Activated B cell treated with CpG ODN at 0.5 μM for 24 hours (primary cell): ENCODE measurements at regions of chr6 and their contacts with region 1.

Region 1: GRCh38 chr6:129875610-129876520 is 14.8 kb upstream of the TMEM244 start:
- DNase-seq: no peak
- ATAC-seq: peak; percentile 72
- H3K4me3 Mint-ChIP-seq: peak overlapping the region; percentile 52
- H3K27ac Mint-ChIP-seq: peak overlapping the region; percentile 27
- H3K4me1 Mint-ChIP-seq: peaks cover 29% of the 10 kb centered on the region
- H3K27me3 Mint-ChIP-seq: no peaks in the 10 kb centered on the region
- CTCF ChIP-seq: no peak

Region 2: DNA sequence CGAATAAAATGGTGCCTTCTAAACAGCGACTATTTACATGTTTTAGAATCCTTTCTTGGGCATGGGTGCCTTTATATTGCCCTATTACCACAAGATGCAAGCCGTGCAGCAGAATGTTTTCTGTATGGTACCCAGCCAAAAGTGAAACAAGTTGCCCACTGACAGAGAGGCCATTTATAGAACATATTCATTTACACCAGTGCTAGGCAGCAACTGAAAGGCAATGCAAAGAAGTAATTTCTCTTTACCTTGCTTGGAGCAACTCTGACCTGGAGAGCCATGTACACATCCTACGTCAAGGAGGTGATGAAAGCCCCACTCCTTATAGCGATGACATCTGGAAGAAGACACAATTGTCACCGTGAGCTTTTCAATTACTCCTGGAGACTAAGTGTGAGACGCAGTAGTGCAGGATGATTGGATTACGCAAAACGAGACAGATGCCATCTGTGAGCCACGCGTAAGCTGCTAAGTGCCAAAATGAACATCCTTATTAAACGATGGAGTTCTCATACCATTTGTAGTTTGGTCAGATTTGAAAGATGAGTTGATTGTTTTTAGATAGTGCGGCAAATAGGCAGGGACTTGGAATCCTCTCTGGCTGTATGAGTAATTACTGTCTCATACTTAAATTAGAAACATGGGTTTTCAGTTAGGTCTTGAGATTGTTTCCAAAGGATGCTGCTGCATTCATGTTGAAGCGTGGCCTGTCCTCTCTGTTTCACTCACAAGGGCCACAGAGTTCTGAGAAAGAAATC is 14.8 kb before region 1 on chr6 and contains the start of gene TMEM244:
- CTCF ChIA-PET with region 1: interaction called, 3 read pairs
- POLR2A ChIA-PET with region 1: interaction called, 3 read pairs
- intact Hi-C with region 1: loop called (anchors 1 kb)
- DNase-seq: no peak
- ATAC-seq: peak; percentile 21
- H3K4me3 Mint-ChIP-seq: peak within 1 kb of the TSS; percentile 45
- H3K27ac Mint-ChIP-seq: peak within 1 kb of the TSS; percentile 36
- H3K4me1 Mint-ChIP-seq: peaks cover 9% of the 10 kb centered on the region
- H3K27me3 Mint-ChIP-seq: no peaks in the 10 kb centered on the region
- CTCF ChIP-seq: no peak
- total RNA-seq, gene TMEM244: not detected in 2 replicates

Region 3: GRCh38 chr6:129893640-129894039 is 17.8 kb after region 1 on chr6:
- CTCF ChIA-PET with region 1: no interaction called
- POLR2A ChIA-PET with region 1: interaction called, 3 read pairs
- intact Hi-C with region 1: loop called (anchors 2 kb)
- DNase-seq: no peak
- ATAC-seq: no peak
- H3K4me3 Mint-ChIP-seq: no peak overlapping the region
- H3K27ac Mint-ChIP-seq: no peak overlapping the region
- H3K4me1 Mint-ChIP-seq: peaks cover 22% of the 10 kb centered on the region
- H3K27me3 Mint-ChIP-seq: no peaks in the 10 kb centered on the region
- CTCF ChIP-seq: no peak

Region 4: DNA sequence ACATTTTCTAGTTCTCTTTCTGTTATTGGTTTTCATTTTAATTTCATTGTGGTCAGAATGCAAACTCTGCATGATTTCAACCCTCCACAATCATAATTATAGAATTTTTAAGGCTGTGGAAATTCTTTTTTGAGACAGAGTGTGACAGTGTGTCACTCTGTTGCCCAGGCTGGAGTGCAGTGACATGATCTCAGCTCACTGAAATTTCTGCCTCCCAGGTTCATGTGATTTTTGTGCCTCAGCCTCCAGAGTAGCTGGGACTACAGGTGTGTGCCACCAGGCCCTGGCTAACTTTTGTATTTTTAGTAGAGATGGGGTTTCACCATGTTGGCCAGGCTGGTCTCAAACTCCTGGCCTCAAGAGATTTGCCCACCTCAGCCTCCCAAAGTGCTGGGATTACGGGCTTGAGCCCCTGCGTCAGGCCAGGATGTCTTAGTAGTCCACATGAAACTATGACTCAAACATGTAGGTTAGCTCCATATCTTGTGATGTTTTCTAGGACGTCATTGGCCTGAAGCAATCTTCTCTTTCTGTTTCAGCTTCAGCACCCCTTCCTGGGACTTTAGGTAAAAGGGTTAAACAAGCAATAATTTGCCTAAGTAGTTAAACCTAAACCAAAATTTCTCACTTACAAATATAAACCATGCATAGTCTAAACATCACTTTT is 394.2 kb after region 1 on chr6:
- CTCF ChIA-PET with region 1: no interaction called
- POLR2A ChIA-PET with region 1: no interaction called
- intact Hi-C with region 1: loop called (anchors 10 kb)
- DNase-seq: no peak
- ATAC-seq: no peak
- H3K4me3 Mint-ChIP-seq: no peak overlapping the region
- H3K27ac Mint-ChIP-seq: no peak overlapping the region
- H3K4me1 Mint-ChIP-seq: peaks cover 12% of the 10 kb centered on the region
- H3K27me3 Mint-ChIP-seq: no peaks in the 10 kb centered on the region
- CTCF ChIP-seq: no peak